ENCODE measurements at regions of chr12 and their contacts with region 1.

Region 1: GRCh38 chr12:66688846-66689439 is 10.1 kb upstream of the GRIP1 start:
- DNase-seq: peak in 28 of 35 experiments; percentile 4 to 64 (median 15)
- ATAC-seq: peak in 3 of 4 experiments; percentile 44 to 76 (median 55)
- H3K4me3 ChIP-seq: no peak overlapping the region
- H3K4me3 Mint-ChIP-seq: no peak overlapping the region
- H3K27ac ChIP-seq: no peak overlapping the region
- H3K27ac Mint-ChIP-seq: no peak overlapping the region
- H3K4me1 ChIP-seq: no peaks in the 10 kb centered on the region
- H3K4me1 Mint-ChIP-seq: peaks cover 0 to 4% (median 0%) of the 10 kb centered on the region in 3 donors
- H3K27me3 ChIP-seq: no peaks in the 10 kb centered on the region
- H3K27me3 Mint-ChIP-seq: peaks cover 2 to 4% of the 10 kb centered on the region in 2 donors

Region 2: DNA sequence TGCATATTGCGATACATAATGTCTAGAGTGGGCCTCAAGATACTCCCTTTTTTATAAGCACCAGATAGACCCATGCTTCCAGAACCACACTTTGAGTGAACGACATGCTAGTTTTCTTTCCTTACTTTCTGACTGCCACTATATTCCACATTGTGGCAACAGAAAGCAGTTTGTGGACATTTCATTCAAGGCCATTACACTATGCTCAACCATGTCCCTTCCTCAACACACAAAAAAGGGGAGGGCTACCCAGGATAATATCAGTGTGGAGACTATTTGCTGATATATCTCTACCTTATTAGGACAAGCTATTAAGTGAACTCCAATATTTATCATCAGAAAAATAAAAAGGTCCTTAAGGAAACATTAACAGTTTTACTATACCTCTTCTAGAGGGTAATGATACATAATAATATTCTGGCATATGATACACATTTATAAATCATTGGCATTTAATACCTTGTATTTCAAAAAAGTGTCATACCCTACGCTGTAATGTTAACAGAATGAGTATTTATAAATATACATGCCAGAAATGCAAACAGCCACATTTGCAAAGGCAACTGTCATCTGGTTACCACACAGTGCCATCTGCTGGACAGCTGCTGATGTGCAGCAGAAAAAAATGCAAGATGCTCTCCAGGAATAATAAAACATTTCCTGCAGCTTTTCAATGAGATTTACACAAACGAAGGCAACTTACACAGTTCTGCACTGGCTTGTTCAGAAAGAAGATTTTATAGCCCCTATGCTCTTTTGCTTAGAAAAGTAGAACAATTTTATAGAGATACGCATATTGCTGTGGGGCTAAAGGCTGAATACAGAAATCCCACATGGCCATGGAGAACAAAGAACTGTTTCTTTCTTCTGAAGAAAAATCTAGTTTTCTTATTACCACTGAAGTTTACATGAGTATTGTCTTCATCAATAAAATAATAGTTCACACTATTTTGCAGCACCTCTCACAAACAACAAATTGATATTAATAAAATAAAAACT is 172.1 kb after region 1 on chr12:
- CTCF ChIA-PET with region 1: interaction called, 10 read pairs
- POLR2A ChIA-PET with region 1: no interaction called
- DNase-seq: peak; percentile 22 to 81 (median 53)
- ATAC-seq: peak in 2 of 4 experiments; percentile 52 to 64
- H3K4me3 ChIP-seq: no peak overlapping the region
- H3K4me3 Mint-ChIP-seq: no peak overlapping the region
- H3K27ac ChIP-seq: no peak overlapping the region
- H3K27ac Mint-ChIP-seq: no peak overlapping the region
- H3K4me1 ChIP-seq: peaks cover 0 to 14% of the 10 kb centered on the region in 2 experiments
- H3K4me1 Mint-ChIP-seq: peaks cover 9 to 19% (median 15%) of the 10 kb centered on the region in 3 donors
- H3K27me3 ChIP-seq: no peaks in the 10 kb centered on the region
- H3K27me3 Mint-ChIP-seq: peaks cover 0 to 9% of the 10 kb centered on the region in 2 donors

Measured in T-cell (primary cell).